ENCODE measurements at regions of chr16 and their contacts with region 1.

Region 1: GRCh38 chr16:18811925-18812324 is 10.6 kb upstream of the ARL6IP1 start:
- DNase-seq: no peak
- ATAC-seq: no peak
- H3K4me3 ChIP-seq: no peak overlapping the region
- H3K27ac ChIP-seq: no peak overlapping the region
- H3K4me1 ChIP-seq: no peaks in the 10 kb centered on the region
- H3K27me3 ChIP-seq: no peaks in the 10 kb centered on the region
- CTCF ChIP-seq: no peak
- POLR2A ChIP-seq: no peak
- RAD21 ChIP-seq: no peak

Region 2: DNA sequence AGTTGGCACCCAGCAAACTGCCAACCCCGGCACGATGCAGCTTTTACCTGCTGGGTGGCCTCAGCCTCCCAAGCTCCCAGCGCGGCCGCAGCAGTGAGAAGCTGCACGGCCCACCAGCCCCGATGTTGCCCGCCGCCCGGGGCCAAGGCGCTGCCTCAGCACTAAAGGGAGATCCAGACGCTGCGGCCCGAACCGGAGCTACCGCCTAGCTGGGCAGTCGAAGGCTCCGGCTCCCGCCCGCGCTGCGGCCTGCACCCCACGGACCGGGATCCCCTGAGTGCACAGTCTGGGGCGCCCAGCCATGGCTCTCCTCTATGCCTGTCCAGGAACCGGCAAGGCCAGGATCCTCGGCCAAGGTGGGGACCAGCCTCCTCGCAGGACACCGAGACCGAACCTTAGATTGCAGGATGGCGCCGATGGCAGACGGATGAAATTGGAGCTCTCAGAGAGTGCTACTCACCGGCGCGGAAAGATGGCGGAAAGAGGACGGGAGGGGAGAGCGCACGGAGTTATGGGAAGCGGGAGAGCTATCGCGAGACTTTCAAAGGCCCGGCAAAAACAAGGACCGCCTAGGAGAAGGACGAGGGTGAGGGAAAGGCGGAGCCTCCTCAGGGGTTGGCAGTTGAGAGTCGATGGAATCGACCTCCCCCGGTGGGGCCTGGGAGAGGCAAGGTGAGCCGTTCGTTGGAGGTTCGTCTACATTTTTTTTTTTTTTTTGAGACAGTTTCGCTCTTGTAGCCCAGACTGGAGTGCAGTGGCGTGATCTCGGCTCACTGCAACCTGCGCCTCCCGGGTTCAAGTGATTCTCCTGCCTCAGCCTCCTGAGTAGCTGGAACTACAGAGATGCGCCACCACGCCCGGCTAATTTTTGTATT is 21.8 kb before region 1 on chr16 and contains the start of gene RPS15A:
- CTCF ChIA-PET with region 1: no interaction called
- POLR2A ChIA-PET with region 1: no interaction called
- dilution Hi-C with region 1: no loop called
- in situ Hi-C with region 1: no loop called
- intact Hi-C with region 1: no loop called
- DNase-seq: peak; percentile 98
- ATAC-seq: peak; percentile 99
- H3K4me3 ChIP-seq: peak within 1 kb of the TSS; percentile 72
- H3K27ac ChIP-seq: peak within 1 kb of the TSS; percentile 81
- H3K4me1 ChIP-seq: peaks cover 2% of the 10 kb centered on the region; the same call in 1 of the 2 replicates
- H3K27me3 ChIP-seq: no peaks in the 10 kb centered on the region
- CTCF ChIP-seq: no peak
- POLR2A ChIP-seq: peak; percentile 97
- RAD21 ChIP-seq: no peak
- total RNA-seq, gene RPS15A: 2,973 and 4,619 TPM in 2 replicates

Region 3: GRCh38 chr16:18853694-18854093 is 41.8 kb after region 1 on chr16:
- CTCF ChIA-PET with region 1: no interaction called
- POLR2A ChIA-PET with region 1: no interaction called
- dilution Hi-C with region 1: no loop called
- in situ Hi-C with region 1: no loop called
- intact Hi-C with region 1: loop called (anchors 2 kb)
- DNase-seq: no peak
- ATAC-seq: no peak
- H3K4me3 ChIP-seq: no peak overlapping the region
- H3K27ac ChIP-seq: no peak overlapping the region
- H3K4me1 ChIP-seq: no peaks in the 10 kb centered on the region
- H3K27me3 ChIP-seq: no peaks in the 10 kb centered on the region
- CTCF ChIP-seq: no peak
- POLR2A ChIP-seq: no peak
- RAD21 ChIP-seq: no peak

Region 4: DNA sequence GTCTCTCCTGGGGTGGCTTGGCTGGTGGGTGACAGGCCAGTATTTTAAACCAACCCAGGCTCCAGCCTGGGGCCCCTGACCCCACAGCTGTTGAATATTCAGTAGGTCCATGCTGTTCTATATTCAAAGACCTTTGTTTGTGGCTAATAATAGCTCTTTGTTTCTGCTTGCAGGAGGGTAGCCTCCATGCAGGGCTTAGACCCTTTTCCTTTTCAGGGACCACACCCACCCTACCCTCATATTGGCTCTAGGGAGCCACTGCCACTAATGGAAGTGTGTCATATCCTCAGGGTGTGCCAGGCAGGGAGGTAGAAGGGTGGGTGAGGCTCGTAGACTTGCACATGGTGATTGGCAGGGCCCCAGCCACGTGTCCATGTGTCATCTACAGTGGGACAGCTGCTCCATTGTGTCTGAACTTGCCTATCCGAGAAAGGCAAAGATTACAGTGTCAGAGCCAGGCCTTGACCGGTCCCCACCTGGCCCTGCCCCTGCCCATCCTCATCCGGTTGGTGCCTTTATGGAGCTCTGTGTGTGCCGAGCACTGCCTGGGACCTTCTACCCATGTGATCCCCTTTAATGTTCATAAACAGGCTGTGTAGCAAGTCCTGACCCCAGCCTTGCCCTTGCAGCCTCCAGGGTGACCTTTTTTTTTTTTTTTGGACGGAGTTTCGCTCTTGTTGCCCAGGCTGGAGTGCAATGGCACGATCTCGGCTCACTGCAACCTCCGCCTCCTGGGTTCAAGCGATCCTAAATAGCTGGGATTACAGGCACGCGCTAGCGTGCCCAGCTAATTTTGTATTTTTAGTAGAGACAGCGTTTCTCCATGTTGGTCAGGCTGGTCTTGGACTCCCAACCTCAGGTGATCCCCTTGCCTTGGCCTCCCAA is 193.9 kb after region 1 on chr16:
- CTCF ChIA-PET with region 1: no interaction called
- POLR2A ChIA-PET with region 1: no interaction called
- dilution Hi-C with region 1: no loop called
- in situ Hi-C with region 1: no loop called
- intact Hi-C with region 1: no loop called
- DNase-seq: peak; percentile 27
- ATAC-seq: no peak
- H3K4me3 ChIP-seq: no peak overlapping the region
- H3K27ac ChIP-seq: no peak overlapping the region
- H3K4me1 ChIP-seq: peaks cover 10% of the 10 kb centered on the region
- H3K27me3 ChIP-seq: no peaks in the 10 kb centered on the region
- CTCF ChIP-seq: no peak
- POLR2A ChIP-seq: no peak
- RAD21 ChIP-seq: no peak

Measured in IMR-90 (cell line).